Right ventricle myocardium inferior (tissue), 1 donor: ENCODE measurements at regions of chr12 and their contacts with region 1.

Region 1: GRCh38 chr12:71663561-71664294 is at the start of gene ZFC3H1:
- DNase-seq: peak; percentile 95
- ATAC-seq: peak; percentile 96
- total RNA-seq, gene ZFC3H1: 15.2 TPM

Region 2: DNA sequence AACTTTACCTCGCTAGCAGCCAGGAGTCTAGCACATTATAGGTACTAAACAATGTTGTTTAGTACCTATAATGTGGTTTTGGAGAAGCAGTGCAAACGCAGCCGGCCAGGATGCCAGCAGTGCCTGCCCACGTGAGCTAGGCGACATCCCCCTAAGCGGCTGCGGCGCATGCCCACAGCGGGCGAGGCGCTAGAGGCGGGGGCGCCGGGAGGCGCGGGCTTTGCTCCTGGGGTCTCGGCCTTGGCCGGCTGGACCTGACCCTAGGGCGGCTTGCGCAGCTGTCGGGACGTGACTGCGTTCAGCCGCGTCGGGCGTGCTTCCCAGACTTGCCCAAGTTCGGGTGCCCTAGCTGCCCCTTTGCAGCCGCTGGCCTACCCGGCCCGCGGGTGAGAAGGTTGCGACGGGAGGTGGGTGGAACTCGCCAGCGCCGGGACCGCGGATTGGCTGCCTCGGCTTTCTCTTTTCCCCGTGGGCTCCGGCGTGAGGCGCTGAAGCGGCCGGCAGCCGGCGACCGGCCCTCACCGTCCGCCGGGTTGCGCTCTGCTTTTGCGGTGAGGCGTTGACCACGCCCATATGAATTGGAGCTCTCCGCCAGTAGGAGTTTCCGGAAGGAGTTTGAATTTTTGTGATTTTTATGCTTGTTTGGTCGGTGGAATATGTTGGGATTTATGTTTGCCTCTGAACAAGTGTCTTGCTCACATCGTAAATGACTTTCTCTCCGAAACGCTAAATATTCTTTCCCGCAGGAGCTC is 22.4 kb after region 1 on chr12 and contains the start of gene TMEM19:
- intact Hi-C with region 1: loop called (anchors 1 kb)
- DNase-seq: peak; percentile 96
- ATAC-seq: peak; percentile 99
- total RNA-seq, gene TMEM19: 25.7 TPM

Region 3: GRCh38 chr12:71754461-71755145 is 90.9 kb after region 1 on chr12 and contains the start of gene RAB21:
- intact Hi-C with region 1: loop called (anchors 2 kb)
- DNase-seq: peak; percentile 99
- ATAC-seq: peak; percentile 97
- total RNA-seq, gene RAB21: 167 TPM

Region 4: DNA sequence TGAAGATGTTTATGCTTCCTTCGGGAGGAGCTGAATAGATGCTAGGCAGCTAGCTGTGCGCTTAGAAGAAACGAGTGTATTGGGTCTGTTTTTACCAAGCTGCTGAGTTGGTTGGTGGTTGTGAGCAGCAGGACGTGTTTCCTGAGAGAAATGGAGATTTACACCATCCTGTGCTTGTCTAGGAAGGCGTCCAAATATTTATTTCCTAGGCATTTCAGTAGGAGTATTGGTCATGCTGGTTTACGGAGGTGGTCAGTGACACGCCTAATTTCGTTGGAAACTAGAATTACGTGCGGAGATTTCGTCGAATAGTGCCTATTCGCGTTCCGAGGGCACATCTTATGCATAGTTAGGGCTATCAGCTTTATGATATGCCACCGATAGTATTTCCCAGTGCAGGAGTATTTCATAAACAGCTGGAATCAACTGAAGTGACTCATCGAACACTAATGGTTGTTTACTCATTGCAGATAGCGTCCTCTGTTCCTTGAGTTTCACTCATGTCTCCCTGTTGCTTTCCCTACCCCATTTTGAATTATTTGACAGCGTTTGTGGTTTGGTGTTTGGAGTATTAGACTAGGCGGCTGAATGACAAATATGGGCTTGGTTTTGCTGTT is 176.6 kb after region 1 on chr12:
- intact Hi-C with region 1: loop called (anchors 2 kb)
- DNase-seq: no peak
- ATAC-seq: no peak